ENCODE measurements at regions of chr1 and their contacts with region 1.

Region 1: GRCh38 chr1:28078680-28079626 is 9.5 kb downstream of the EYA3 start:
- DNase-seq: no peak
- H3K4me3 ChIP-seq: no peak overlapping the region
- H3K27ac ChIP-seq: peak overlapping the region; percentile 84
- H3K4me1 ChIP-seq: peaks cover 92% of the 10 kb centered on the region
- CTCF ChIP-seq: no peak

Region 2: DNA sequence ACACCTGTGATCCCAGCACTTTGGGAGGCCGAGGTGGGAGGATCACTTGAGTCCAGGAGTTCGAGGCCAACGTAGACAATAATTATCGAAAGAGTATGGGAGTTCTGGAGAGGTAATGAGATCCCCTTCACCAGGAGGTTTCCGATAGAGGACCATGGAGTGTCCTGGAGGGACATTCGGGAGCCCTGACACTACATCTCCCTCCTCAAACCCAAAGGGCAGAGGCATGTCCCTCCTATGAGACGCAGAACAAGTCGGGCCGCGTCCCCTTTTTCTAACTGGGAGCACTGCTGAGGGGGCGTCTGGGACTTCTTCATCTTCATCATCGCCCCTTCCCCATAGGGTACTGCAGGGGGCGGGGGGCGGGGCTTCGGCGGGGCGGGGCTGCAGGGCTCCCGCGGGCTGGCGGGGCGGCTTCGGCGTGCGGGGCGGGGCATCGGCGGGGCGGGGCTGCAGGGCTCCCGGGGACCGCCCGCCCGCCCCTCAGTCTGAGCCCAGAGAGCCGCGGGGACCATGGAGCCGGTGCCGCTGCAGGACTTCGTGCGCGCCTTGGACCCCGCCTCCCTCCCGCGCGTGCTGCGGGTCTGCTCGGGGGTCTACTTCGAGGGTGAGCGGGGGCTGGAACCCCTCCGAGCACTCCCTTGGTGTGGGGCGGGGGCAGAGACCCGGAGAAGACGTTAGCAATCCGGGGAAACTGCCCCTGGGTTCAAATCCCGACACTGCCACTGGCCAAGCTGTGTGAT is 206.7 kb before region 1 on chr1 and contains the start of gene THEMIS2:
- CTCF ChIA-PET with region 1: no interaction called
- POLR2A ChIA-PET with region 1: no interaction called
- intact Hi-C with region 1: loop called (anchors 10 kb)
- DNase-seq: peak; percentile 71
- H3K4me3 ChIP-seq: peak within 1 kb of the TSS; percentile 77
- H3K27ac ChIP-seq: peak within 1 kb of the TSS; percentile 0
- H3K4me1 ChIP-seq: peaks cover 66% of the 10 kb centered on the region
- CTCF ChIP-seq: no peak
- total RNA-seq, gene THEMIS2: 0.98 and 4.1 TPM in 2 replicates

Region 3: GRCh38 chr1:28056129-28056925 is 22.6 kb before region 1 on chr1:
- CTCF ChIA-PET with region 1: interaction called, 4 read pairs
- POLR2A ChIA-PET with region 1: interaction called, 11 read pairs
- intact Hi-C with region 1: no loop called
- DNase-seq: no peak
- H3K4me3 ChIP-seq: peak overlapping the region; percentile 4
- H3K27ac ChIP-seq: peak overlapping the region; percentile 34
- H3K4me1 ChIP-seq: peaks cover 45% of the 10 kb centered on the region
- CTCF ChIP-seq: no peak

Region 4: DNA sequence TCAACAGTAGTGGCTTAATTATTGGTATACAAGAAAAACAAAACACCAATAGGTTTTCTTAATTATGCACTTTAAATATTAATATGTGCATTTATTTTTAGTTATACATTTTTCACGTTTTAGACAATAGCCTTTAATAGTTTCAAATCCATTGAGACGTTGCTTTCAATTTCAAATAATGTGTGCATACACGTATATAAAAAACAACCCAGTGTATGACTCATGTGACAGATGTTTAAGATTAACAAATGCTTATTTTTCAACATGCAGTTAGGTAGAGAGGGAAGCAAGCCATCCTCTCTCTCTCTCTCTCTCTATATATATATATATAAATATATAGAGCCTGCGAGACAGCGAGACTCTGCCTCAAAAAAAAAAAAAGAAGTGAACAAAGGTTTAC is 14.9 kb before region 1 on chr1:
- CTCF ChIA-PET with region 1: interaction called, 3 read pairs
- POLR2A ChIA-PET with region 1: interaction called, 138 read pairs
- intact Hi-C with region 1: no loop called
- DNase-seq: peak; percentile 44
- H3K4me3 ChIP-seq: peak overlapping the region; percentile 63
- H3K27ac ChIP-seq: peak overlapping the region; percentile 88
- H3K4me1 ChIP-seq: peaks cover 81% of the 10 kb centered on the region
- CTCF ChIP-seq: no peak

Region 5: DNA sequence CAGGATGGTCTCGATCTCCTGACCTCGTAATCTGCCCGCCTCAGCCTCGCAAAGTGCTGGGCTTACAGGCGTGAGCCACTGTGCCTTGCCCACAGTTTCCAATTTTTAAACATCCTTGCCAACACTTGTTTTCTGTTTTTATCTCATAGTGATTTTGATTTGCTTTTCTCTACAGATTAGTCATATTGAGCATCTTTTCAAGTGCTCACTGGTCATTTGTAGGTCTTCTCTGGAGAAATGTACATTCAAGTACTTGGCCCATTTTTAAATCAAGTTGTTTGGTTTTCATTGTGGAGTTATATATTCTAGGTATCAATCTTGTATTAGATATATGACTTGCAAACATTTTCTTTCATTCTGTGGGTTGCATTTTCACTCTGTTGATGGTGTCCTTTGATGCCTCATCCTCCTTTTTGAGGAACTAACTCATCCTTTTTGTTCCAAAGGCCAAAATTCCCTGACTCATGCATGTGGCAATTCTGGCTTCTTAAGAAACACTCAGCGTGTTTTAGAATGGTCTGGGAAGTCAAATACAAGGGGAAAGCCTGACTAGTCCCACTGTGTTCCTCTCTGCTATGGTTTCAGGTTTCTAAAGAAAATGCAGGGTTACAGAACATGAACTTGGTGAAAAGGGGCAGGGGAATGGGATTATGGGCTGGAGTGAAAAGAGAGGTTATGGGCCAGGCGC is 60.2 kb after region 1 on chr1:
- CTCF ChIA-PET with region 1: no interaction called
- POLR2A ChIA-PET with region 1: no interaction called
- intact Hi-C with region 1: no loop called
- DNase-seq: no peak
- H3K4me3 ChIP-seq: no peak overlapping the region
- H3K27ac ChIP-seq: no peak overlapping the region
- H3K4me1 ChIP-seq: peaks cover 49% of the 10 kb centered on the region
- CTCF ChIP-seq: no peak

Measured in OCI-LY7 (cell line).